ENCODE measurements at regions of chr18 and their contacts with region 1.

Region 1: DNA sequence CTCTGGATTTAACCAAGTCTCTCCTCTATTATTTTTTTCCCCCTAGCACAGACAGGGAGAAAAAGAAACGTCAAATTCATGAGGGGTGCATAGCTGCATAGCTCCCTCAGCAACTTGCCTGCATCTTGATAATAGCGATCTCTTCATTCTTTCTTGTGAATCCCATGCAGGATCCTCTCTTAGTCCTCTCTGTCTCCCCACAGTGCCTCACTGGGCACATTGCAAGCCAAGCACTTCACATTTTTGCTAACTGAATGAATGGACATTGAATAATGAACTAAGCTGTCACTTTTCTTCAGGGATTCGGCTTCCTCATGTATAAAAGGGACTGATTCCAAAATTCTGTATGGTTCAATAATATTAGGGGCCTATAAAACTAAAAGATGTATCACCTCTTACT is 2.9 kb upstream of the EPB41L3 start:
- DNase-seq: peak; percentile 76
- H3K4me3 ChIP-seq: no peak overlapping the region
- H3K27ac ChIP-seq: no peak overlapping the region
- H3K4me1 ChIP-seq: peaks cover 16% of the 10 kb centered on the region
- H3K27me3 ChIP-seq: no peaks in the 10 kb centered on the region
- CTCF ChIP-seq: peak; percentile 59 to 68
- POLR2A ChIP-seq: no peak

Region 2: GRCh38 chr18:5295981-5296705 is 250.5 kb before region 1 on chr18:
- CTCF ChIA-PET with region 1: interaction called, 6 read pairs
- POLR2A ChIA-PET with region 1: no interaction called
- dilution Hi-C with region 1: no loop called
- intact Hi-C with region 1: loop called (anchors 2 kb)
- DNase-seq: peak; percentile 97
- H3K4me3 ChIP-seq: peak overlapping the region; percentile 44 to 94 (median 49)
- H3K27ac ChIP-seq: peak overlapping the region; percentile 59
- H3K4me1 ChIP-seq: peaks cover 17% of the 10 kb centered on the region
- H3K27me3 ChIP-seq: peaks cover 10 to 17% of the 10 kb centered on the region in 2 experiments
- CTCF ChIP-seq: no peak
- POLR2A ChIP-seq: no peak

Region 3: GRCh38 chr18:5431836-5432575 is 114.7 kb before region 1 on chr18:
- CTCF ChIA-PET with region 1: interaction called, 54 read pairs
- POLR2A ChIA-PET with region 1: no interaction called
- dilution Hi-C with region 1: no loop called
- intact Hi-C with region 1: no loop called
- DNase-seq: peak; percentile 43
- H3K4me3 ChIP-seq: no peak overlapping the region
- H3K27ac ChIP-seq: no peak overlapping the region
- H3K4me1 ChIP-seq: peaks cover 8% of the 10 kb centered on the region
- H3K27me3 ChIP-seq: no peaks in the 10 kb centered on the region
- CTCF ChIP-seq: no peak
- POLR2A ChIP-seq: no peak

Region 4: GRCh38 chr18:5463379-5463778 is 83.3 kb before region 1 on chr18:
- CTCF ChIA-PET with region 1: interaction called, 20 read pairs
- POLR2A ChIA-PET with region 1: no interaction called
- dilution Hi-C with region 1: no loop called
- intact Hi-C with region 1: no loop called
- DNase-seq: no peak
- H3K4me3 ChIP-seq: no peak overlapping the region
- H3K27ac ChIP-seq: no peak overlapping the region
- H3K4me1 ChIP-seq: peaks cover 36% of the 10 kb centered on the region
- H3K27me3 ChIP-seq: no peaks in the 10 kb centered on the region
- CTCF ChIP-seq: no peak
- POLR2A ChIP-seq: no peak

Region 5: DNA sequence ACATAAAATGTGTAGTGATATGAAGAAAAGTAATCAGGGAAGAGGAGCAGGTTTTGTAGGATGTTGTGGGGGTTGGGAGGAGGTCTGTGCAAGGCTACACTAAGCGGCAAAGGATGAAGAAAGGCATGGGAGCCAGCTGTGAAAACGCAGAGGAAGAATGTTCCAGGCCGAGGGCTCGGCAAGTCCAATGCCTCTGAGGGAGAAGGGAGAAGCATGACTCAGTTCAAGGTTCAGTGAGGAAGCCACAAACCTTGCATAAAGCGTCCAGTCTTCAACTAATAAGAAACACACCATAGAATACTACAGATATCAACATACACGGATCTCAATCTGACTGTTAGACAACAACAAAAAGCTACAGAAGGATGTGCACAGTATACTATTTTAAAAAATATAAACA is 19.1 kb before region 1 on chr18:
- CTCF ChIA-PET with region 1: interaction called, 16 read pairs
- POLR2A ChIA-PET with region 1: no interaction called
- dilution Hi-C with region 1: no loop called
- intact Hi-C with region 1: no loop called
- DNase-seq: peak; percentile 46
- H3K4me3 ChIP-seq: no peak overlapping the region
- H3K27ac ChIP-seq: no peak overlapping the region
- H3K4me1 ChIP-seq: peaks cover 3% of the 10 kb centered on the region
- H3K27me3 ChIP-seq: no peaks in the 10 kb centered on the region
- CTCF ChIP-seq: no peak
- POLR2A ChIP-seq: no peak

Region 6: GRCh38 chr18:5720132-5720531 is 173.5 kb after region 1 on chr18:
- CTCF ChIA-PET with region 1: no interaction called
- POLR2A ChIA-PET with region 1: no interaction called
- dilution Hi-C with region 1: no loop called
- intact Hi-C with region 1: no loop called
- DNase-seq: no peak
- H3K4me3 ChIP-seq: no peak overlapping the region
- H3K27ac ChIP-seq: no peak overlapping the region
- H3K4me1 ChIP-seq: no peaks in the 10 kb centered on the region
- H3K27me3 ChIP-seq: no peaks in the 10 kb centered on the region
- CTCF ChIP-seq: no peak
- POLR2A ChIP-seq: no peak